Prostate gland (tissue), 2 donors: ENCODE measurements at regions of chr18 and their contacts with region 1.

Region 1: DNA sequence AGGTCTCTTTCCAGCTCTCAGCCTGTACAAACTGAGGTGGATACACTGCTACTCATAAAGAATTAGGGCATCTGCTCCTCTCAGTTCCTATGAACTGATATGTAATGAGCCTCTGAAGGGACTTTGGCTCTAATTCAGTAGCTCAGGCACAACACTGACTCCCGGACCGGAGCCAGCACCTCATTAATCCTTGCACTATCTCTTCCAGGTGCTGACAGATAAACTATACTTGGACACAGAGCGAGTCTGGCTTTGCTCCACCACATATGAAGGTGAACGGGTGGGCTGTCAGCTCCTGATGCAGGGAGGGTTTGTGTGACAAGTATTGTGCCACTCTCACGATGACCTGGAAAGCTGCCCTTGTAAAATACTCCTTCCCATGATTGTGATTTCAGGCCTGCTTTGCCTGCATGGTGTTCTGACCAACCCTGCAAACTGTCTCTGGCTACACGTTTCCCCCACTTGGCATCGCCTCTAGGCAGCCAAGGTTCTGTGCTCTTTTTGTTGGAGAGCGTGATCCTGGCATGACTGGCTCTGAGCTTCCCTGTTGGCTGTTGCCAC is 111.6 kb upstream of the LMAN1 start:
- DNase-seq: peak; percentile 12
- H3K4me3 ChIP-seq: no peak overlapping the region
- H3K27ac ChIP-seq: no peak overlapping the region
- H3K4me1 ChIP-seq: no peaks in the 10 kb centered on the region
- H3K27me3 ChIP-seq: no peaks in the 10 kb centered on the region
- CTCF ChIP-seq: no peak
- POLR2A ChIP-seq: no peak

Region 2: DNA sequence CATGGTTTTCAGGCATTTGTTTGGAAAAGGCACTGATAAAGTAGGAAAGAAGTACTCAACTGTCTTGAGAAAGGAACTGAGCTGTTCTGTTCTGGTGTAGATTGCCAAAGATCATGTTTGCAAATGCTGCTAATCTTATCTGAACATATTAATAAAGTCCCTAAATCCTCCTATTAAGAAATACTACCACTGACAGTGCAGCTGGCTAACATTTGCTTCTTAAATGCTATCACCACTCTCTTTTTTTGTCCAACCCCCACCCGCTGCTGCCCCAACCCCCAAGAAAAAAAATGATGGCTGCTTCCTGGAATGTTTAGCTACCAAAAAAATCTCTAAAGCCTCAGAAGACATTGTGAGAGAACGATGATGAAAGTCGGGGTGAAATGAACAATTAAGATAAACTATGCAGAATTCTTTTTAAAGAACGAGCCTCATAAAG is 95.9 kb after region 1 on chr18:
- intact Hi-C with region 1: loop called (anchors 5 kb)
- DNase-seq: no peak
- H3K4me3 ChIP-seq: no peak overlapping the region
- H3K27ac ChIP-seq: no peak overlapping the region
- H3K4me1 ChIP-seq: no peaks in the 10 kb centered on the region
- H3K27me3 ChIP-seq: no peaks in the 10 kb centered on the region
- CTCF ChIP-seq: no peak
- POLR2A ChIP-seq: no peak